ENCODE measurements at regions of chr6 and their contacts with region 1.

Region 1: GRCh38 chr6:90285611-90286381 is 10.8 kb downstream of the BACH2 start:
- DNase-seq: peak; percentile 69
- H3K4me3 ChIP-seq: no peak overlapping the region
- H3K27ac ChIP-seq: peak overlapping the region; percentile 87
- H3K4me1 ChIP-seq: peaks cover 22% of the 10 kb centered on the region
- H3K27me3 ChIP-seq: no peaks in the 10 kb centered on the region
- CTCF ChIP-seq: no peak

Region 2: DNA sequence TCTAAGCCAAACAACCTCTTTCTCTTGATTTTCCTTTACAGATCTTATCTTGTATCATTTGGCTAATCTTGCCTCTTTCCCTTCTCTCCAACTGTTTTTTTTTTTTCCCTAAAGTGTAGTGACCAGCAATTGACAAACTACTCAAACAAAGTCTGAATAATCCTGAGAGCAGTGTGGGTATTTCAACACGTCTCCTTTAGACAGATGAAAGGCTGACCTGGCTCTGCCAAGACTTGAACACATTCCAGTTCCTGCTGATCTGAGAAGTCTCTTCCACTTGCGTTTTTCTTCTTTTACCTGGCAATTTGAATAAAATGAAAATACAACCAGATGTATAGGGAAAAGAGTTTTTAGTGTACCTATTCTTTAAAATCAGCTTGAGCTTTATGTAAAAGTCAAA is 223.1 kb before region 1 on chr6:
- CTCF ChIA-PET with region 1: no interaction called
- POLR2A ChIA-PET with region 1: no interaction called
- intact Hi-C with region 1: no loop called
- DNase-seq: no peak
- H3K4me3 ChIP-seq: no peak overlapping the region
- H3K27ac ChIP-seq: no peak overlapping the region
- H3K4me1 ChIP-seq: no peaks in the 10 kb centered on the region
- H3K27me3 ChIP-seq: no peaks in the 10 kb centered on the region
- CTCF ChIP-seq: no peak

Region 3: DNA sequence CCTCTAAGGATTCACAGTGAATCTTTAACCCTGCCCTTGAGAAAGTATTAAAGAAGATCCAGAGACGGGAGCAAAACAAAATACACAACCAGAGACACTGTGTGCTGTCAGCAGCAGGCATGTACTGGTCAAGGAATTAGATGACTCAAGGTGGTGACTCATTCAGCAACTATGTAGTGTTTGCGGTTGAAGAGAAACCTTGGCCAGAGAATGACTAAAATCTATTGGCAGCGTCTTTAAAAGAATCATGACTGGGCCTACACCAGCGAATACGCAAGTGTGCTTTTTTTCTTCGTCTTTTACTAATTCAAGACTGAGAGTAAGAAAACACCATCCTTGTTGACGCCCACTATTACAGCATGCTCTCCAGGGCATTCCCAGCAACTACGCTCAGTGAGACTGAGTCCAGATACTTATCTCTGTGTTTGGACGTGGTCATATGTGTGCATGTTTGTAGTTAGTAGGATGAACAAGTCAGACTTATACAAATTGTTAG is 83.3 kb after region 1 on chr6:
- CTCF ChIA-PET with region 1: no interaction called
- POLR2A ChIA-PET with region 1: no interaction called
- intact Hi-C with region 1: loop called (anchors 2 kb)
- DNase-seq: peak; percentile 72 to 97
- H3K4me3 ChIP-seq: no peak overlapping the region
- H3K27ac ChIP-seq: peak overlapping the region; percentile 78
- H3K4me1 ChIP-seq: peaks cover 21% of the 10 kb centered on the region
- H3K27me3 ChIP-seq: no peaks in the 10 kb centered on the region
- CTCF ChIP-seq: no peak

Region 4: DNA sequence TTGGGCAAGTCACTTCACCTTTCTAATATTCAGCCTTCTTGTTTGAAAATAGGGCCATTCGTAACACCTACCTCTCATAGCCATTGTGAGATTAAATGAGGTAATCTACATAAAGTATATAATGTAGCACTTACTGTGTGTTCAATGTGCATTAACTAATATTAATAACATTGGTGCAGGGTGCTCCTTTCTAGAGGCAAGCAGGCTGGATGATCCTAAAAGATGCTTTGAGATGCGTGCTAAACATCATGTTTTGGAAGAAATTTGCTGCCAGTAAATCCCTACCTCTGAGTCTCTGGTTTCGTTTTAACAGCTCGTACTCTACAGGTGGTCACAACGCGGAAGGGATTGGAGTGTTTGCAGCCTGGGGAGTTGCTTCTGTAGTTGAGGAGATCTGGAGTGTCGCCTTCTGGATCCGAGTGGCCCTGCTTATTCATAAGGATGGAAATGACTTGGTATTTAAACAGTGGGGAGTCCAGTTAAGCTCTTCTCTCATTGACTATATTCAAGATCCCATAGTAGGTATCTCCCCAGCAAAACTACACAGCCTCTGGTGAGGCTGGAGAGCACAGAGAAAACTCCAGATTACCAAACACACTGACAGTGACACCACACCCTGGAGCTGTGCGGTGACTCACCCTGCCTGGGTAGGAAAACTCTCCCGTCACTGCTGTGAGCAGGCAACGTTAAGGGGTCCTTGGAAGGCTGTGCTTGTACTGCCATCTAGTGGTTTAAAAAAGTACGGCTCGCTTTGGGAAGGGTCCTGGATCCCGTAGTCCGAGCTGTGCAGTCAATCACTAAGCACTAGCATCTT is 193.2 kb after region 1 on chr6:
- CTCF ChIA-PET with region 1: interaction called, 3 read pairs
- POLR2A ChIA-PET with region 1: interaction called, 3 read pairs
- intact Hi-C with region 1: loop called (anchors 1 kb)
- DNase-seq: peak; percentile 81 to 82
- H3K4me3 ChIP-seq: no peak overlapping the region
- H3K27ac ChIP-seq: no peak overlapping the region
- H3K4me1 ChIP-seq: no peaks in the 10 kb centered on the region
- H3K27me3 ChIP-seq: no peaks in the 10 kb centered on the region
- CTCF ChIP-seq: peak; percentile 81